Dendritic cell treated with granulocyte-macrophage colony-stimulating factor and Interleukin-4, amounts not matched to agents 40 ng/mL and 50 ng/mL, for 4 days (primary cell): ENCODE measurements at regions of chr7 and their contacts with region 1.

Region 1: DNA sequence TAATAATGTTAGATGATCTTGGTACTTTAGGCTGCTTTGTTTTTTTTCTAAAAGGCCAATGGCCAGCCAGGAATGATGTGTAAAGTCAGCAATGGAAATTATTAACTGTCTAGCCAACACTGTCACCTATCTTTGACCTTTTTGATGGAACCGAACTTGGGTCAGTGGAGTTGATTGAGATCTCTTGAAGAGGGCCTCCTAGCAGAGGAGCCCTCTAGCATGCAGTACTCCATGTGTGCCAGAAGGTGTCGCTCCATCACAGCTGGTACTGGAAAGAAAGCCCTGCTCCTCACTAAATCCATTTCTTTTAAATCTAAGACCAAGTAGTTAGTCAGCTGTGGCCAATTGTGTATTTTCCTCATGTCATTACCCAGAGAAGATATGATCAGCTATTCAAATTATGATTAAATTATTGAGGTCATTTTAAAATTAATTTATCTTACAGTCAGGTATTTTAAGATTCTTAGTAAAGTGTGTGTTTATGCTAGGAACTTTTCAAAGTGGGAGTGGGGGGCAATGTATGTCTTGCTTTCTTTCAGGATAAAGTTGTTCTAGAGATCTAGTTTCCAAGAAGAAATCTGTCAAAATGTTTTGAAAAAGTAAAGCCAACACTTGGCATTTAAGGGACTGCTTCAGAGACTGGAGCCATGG is 33.1 kb upstream of the CROT start:
- H3K4me3 Mint-ChIP-seq: no peak overlapping the region
- H3K27ac Mint-ChIP-seq: no peak overlapping the region
- H3K4me1 Mint-ChIP-seq: no peaks in the 10 kb centered on the region
- H3K27me3 Mint-ChIP-seq: peaks cover 1% of the 10 kb centered on the region

Region 2: DNA sequence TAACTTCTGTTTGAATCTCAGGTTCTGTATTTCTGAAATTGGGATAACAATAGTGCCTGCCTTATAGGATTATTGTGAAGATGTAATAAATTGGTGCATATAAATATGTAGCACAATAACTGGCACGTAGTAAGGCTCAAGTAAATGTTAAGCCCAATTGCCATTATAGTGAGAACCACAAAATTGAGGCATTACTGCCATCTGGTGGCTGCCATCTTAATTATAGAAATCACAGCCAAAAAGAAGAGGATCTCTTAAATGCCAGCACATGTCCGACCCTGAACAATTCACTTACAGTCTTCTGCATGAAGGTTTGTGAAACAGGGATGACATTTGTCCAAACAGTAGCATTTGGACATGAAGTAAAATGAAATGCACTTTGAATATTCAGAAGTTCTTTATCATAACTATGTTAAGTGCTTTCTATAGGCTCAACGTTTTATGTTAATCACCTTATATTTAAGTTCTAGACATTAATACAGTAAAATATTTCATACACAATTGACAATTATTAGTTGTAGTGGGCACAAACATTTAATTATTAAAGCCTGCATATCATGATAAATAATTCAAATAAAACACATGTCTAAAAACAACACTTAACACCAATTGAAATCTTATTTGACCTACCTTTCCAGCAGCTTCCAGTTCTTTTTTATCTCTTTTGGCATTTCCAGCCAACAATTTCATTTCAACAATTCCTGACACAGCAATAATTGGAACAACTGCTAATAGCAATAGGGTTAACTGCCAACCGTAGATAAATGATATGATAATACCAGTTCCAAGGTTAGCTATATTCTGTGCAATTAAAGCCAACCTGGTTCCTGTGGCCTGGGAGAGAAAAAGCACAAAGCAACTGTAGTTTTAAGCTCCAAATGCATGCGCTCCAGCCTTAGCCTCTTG is 104.6 kb after region 1 on chr7:
- intact Hi-C with region 1: loop called (anchors 1 kb)
- H3K4me3 Mint-ChIP-seq: no peak overlapping the region
- H3K27ac Mint-ChIP-seq: no peak overlapping the region
- H3K4me1 Mint-ChIP-seq: no peaks in the 10 kb centered on the region
- H3K27me3 Mint-ChIP-seq: no peaks in the 10 kb centered on the region

Region 3: DNA sequence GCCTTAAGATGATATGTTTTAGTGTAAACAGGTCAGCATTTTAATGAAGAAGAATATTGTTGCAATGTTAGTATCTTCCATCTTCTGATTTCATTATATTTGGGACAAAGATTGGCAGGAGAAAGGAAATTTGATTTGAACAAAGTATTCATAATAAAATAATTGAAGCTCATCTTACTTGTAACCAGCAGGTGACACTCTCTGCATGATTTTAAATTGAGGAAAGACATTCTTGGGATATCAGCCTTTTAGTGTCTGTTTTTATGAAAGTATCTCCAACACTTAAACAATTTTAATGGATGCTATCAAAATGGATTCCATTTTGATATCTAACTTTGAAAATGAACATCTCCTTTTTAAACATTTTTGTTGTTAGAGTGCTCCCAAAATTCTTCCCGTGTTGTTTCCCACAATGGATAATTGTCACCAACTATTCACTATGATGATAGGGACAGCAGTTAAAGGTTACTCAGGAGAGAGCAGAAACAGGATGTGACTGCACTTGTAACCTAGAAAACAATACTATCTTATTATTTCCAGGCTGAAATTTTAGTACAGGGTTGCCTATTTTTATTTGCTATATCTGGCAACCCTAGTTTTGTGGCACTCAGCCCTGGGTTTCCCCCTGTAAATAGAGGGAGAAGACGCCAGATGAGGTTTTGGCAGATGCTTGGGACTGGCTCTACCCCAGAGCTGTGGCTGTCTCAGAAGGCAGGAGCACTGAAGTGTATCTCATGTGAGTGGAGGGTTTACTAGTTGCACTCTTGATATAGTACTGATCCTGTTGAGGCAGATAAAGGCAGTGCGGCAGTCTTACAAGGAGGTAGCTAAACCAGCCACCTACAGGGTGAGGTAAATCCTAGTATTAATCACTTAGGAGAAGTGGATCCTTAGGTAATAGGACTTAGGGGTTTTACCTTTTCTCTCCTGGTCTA is 194.2 kb after region 1 on chr7:
- intact Hi-C with region 1: loop called (anchors 5 kb)
- H3K4me3 Mint-ChIP-seq: no peak overlapping the region
- H3K27ac Mint-ChIP-seq: no peak overlapping the region
- H3K4me1 Mint-ChIP-seq: peaks cover 5% of the 10 kb centered on the region
- H3K27me3 Mint-ChIP-seq: no peaks in the 10 kb centered on the region

Region 4: GRCh38 chr7:87564289-87564963 is 252.1 kb after region 1 on chr7:
- intact Hi-C with region 1: loop called (anchors 2 kb)
- H3K4me3 Mint-ChIP-seq: no peak overlapping the region
- H3K27ac Mint-ChIP-seq: no peak overlapping the region
- H3K4me1 Mint-ChIP-seq: peaks cover 5% of the 10 kb centered on the region
- H3K27me3 Mint-ChIP-seq: no peaks in the 10 kb centered on the region

Region 5: GRCh38 chr7:87886875-87887274 is 574.5 kb after region 1 on chr7:
- intact Hi-C with region 1: loop called (anchors 10 kb)
- H3K4me3 Mint-ChIP-seq: no peak overlapping the region
- H3K27ac Mint-ChIP-seq: no peak overlapping the region
- H3K4me1 Mint-ChIP-seq: no peaks in the 10 kb centered on the region
- H3K27me3 Mint-ChIP-seq: no peaks in the 10 kb centered on the region

Region 6: GRCh38 chr7:88111136-88111743 is 798.9 kb after region 1 on chr7:
- intact Hi-C with region 1: loop called (anchors 5 kb)
- H3K4me3 Mint-ChIP-seq: no peak overlapping the region
- H3K27ac Mint-ChIP-seq: no peak overlapping the region
- H3K4me1 Mint-ChIP-seq: peaks cover 7% of the 10 kb centered on the region
- H3K27me3 Mint-ChIP-seq: no peaks in the 10 kb centered on the region